Breast epithelium (tissue), 4 donors: ENCODE measurements at regions of chr5 and their contacts with region 1.

Region 1: GRCh38 chr5:165360784-165361542 is 1855.5 kb downstream of the MAT2B start:
- DNase-seq: no peak
- H3K4me3 ChIP-seq: no peak overlapping the region
- H3K27ac ChIP-seq: no peak overlapping the region
- H3K4me1 ChIP-seq: no peaks in the 10 kb centered on the region
- H3K27me3 ChIP-seq: no peaks in the 10 kb centered on the region
- CTCF ChIP-seq: no peak
- POLR2A ChIP-seq: no peak

Region 2: DNA sequence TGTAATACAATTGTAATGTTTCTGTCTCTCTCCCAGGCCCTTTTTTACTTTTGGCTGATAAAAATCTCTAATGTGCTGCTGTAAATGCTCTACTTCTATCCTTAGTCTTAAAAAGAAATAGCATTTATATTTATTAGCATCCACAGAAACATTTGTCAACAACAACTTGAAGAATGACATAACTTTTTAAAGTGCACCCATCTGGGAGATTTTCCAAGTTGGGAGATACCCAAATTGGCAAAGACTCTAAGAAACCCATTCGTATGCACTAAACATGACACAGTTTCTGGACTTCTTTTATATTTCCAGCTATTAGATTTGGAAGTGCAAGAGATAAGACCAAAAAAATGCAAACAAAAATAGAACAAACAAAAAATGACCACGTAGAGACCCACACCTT is 643.0 kb after region 1 on chr5:
- intact Hi-C with region 1: loop called (anchors 5 kb)
- DNase-seq: no peak
- H3K4me3 ChIP-seq: no peak overlapping the region
- H3K27ac ChIP-seq: no peak overlapping the region
- H3K4me1 ChIP-seq: no peaks in the 10 kb centered on the region
- H3K27me3 ChIP-seq: no peaks in the 10 kb centered on the region
- CTCF ChIP-seq: no peak
- POLR2A ChIP-seq: no peak